ENCODE measurements at regions of chr1 and their contacts with region 1.

Region 1: GRCh38 chr1:208036109-208036808 is 125.3 kb upstream of the CD34 start:
- DNase-seq: peak; percentile 55 to 66 (median 62)
- ATAC-seq: peak; percentile 87
- H3K4me3 ChIP-seq: no peak overlapping the region
- H3K27ac ChIP-seq: no peak overlapping the region
- H3K4me1 ChIP-seq: peaks cover 5 to 6% of the 10 kb centered on the region in 2 experiments; a peak in 4 of 5 replicates
- H3K27me3 ChIP-seq: peaks cover 30 to 71% of the 10 kb centered on the region in 2 experiments; a peak in 4 of 5 replicates
- CTCF ChIP-seq: peak; percentile 64 to 78 (median 69)
- EP300 ChIP-seq: no peak
- POLR2A ChIP-seq: no peak
- RAD21 ChIP-seq: peak in 1 of 2 experiments; percentile 72; a peak in 3 of 4 replicates

Region 2: GRCh38 chr1:208093754-208094719 is 57.8 kb after region 1 on chr1:
- CTCF ChIA-PET with region 1: no interaction called
- POLR2A ChIA-PET with region 1: no interaction called
- in situ Hi-C with region 1: no loop called
- intact Hi-C with region 1: loop called (anchors 1 kb)
- DNase-seq: peak; percentile 83 to 93 (median 87)
- ATAC-seq: peak; percentile 98
- H3K4me3 ChIP-seq: no peak overlapping the region
- H3K27ac ChIP-seq: no peak overlapping the region
- H3K4me1 ChIP-seq: no peaks in the 10 kb centered on the region
- H3K27me3 ChIP-seq: peaks cover 11 to 30% of the 10 kb centered on the region in 2 experiments; a peak in 4 of 5 replicates
- CTCF ChIP-seq: peak; percentile 88 to 95 (median 88)
- EP300 ChIP-seq: no peak
- POLR2A ChIP-seq: no peak
- RAD21 ChIP-seq: peak; percentile 64 to 83